Endothelial cell of umbilical vein (primary cell): ENCODE measurements at regions of chr12 and their contacts with region 1.

Region 1: DNA sequence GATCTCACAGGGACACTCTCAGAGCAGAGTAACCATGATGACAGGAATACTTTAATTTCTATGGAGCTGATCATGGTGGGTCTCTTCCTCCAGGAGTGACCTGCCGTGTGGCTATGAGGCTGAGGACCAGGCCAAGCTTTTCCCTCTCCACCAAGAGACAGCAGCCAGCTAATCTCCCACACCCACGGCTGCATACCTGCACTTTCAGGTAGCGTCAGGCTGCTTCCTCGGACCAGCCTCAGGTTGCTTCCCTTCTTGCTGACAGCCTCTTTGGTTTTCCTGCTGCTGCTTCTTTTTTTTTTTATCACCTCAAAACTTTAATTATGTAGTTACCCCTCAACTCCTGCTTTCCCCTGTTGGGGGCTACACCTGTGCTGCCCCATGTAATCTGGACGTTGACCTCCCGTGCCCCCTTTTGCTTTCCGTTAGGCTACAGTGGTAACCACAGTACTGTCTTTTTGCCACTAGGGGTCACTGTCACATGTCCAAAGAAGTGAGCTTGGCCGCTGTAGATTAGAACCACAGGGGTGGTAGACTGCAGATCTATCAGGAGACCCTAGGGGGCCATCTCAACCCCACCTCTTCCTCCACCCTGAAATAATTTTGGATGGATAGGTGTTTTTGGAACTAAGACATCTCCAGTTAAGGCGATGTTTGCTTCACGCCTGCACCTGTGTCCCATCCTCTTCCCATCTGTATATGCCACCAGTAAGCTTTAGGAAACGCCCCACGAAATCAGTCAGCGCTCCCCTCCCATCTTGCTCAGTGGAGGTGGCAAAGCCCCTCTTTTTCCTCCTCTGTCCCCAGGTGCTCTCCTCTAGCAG is 7.8 kb upstream of the PIP4K2C start:
- DNase-seq: peak; percentile 71
- H3K4me3 ChIP-seq: no peak overlapping the region
- H3K27ac ChIP-seq: no peak overlapping the region
- H3K4me1 ChIP-seq: no peaks in the 10 kb centered on the region
- H3K27me3 ChIP-seq: peaks cover 17 to 21% of the 10 kb centered on the region in 2 experiments
- CTCF ChIP-seq: peak; percentile 87 to 93
- POLR2A ChIP-seq: no peak

Region 2: DNA sequence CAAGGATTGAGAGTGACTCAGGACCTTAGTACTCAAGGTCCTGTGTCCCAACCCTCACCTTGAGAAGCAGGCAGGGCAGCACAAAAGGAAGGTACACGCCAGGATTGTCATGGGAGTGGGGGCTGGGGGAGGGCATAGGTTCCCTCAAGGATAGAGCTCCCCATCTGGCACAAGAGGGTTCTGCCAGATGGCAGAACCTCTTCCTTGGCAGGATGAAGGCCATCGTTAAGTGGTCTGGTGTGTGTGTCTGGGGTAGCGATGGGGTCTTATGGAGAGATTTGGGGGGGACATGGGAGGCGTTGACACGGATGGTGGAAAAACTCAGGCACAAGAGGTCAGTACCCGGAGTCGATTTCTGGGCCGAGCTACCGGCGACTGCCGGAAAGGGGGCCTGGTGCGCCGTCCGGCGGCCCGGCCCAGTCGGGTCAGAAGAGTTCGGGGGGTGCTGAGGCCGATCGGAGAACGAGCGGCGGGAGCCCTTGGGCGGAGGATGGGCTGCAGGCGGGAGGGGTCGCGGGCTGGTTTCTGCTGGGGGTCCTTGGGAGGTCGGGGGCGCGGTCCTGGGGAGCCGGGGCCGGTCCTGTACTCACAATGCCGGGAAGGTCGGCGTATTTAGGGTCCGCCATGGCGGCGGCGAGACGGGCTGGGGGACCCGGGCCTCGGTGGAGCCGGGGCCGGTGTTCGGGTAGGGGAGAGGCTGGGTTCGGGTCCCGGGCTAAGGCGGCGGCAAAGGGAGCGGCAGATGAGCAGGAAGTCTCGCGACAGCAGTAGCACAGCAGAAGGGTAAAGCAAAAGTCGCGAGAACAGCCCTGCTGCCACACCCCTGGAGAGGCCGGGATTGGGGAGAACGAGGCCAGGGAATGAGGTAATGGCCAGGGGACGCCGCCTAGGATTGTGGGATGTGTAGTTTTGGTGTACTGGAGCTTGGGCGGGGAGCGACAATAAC is 36.5 kb before region 1 on chr12 and contains the start of gene DCTN2:
- CTCF ChIA-PET with region 1: interaction called, 12 read pairs
- POLR2A ChIA-PET with region 1: no interaction called
- dilution Hi-C with region 1: no loop called
- intact Hi-C with region 1: no loop called
- DNase-seq: peak; percentile 96
- H3K4me3 ChIP-seq: peak within 1 kb of the TSS; percentile 80 to 94 (median 82)
- H3K27ac ChIP-seq: peak within 1 kb of the TSS; percentile 77
- H3K4me1 ChIP-seq: peaks cover 18% of the 10 kb centered on the region
- H3K27me3 ChIP-seq: peaks cover 27 to 37% of the 10 kb centered on the region in 2 experiments
- CTCF ChIP-seq: no peak
- POLR2A ChIP-seq: no peak
- total RNA-seq, gene DCTN2: 157 and 161 TPM in 2 replicates

Region 3: GRCh38 chr12:57611108-57611809 is 28.0 kb after region 1 on chr12 and contains the start of gene ARHGEF25:
- CTCF ChIA-PET with region 1: interaction called, 54 read pairs
- POLR2A ChIA-PET with region 1: interaction called, 5 read pairs
- dilution Hi-C with region 1: no loop called
- intact Hi-C with region 1: no loop called
- DNase-seq: peak; percentile 24
- H3K4me3 ChIP-seq: peak within 1 kb of the TSS; percentile 46 to 67 (median 54)
- H3K27ac ChIP-seq: no peak within 1 kb of the TSS
- H3K4me1 ChIP-seq: peaks cover 3% of the 10 kb centered on the region
- H3K27me3 ChIP-seq: peaks cover 5 to 12% of the 10 kb centered on the region in 2 experiments
- CTCF ChIP-seq: no peak
- POLR2A ChIP-seq: peak; percentile 56
- total RNA-seq, gene ARHGEF25: 4.7 and 7.4 TPM in 2 replicates

Region 4: DNA sequence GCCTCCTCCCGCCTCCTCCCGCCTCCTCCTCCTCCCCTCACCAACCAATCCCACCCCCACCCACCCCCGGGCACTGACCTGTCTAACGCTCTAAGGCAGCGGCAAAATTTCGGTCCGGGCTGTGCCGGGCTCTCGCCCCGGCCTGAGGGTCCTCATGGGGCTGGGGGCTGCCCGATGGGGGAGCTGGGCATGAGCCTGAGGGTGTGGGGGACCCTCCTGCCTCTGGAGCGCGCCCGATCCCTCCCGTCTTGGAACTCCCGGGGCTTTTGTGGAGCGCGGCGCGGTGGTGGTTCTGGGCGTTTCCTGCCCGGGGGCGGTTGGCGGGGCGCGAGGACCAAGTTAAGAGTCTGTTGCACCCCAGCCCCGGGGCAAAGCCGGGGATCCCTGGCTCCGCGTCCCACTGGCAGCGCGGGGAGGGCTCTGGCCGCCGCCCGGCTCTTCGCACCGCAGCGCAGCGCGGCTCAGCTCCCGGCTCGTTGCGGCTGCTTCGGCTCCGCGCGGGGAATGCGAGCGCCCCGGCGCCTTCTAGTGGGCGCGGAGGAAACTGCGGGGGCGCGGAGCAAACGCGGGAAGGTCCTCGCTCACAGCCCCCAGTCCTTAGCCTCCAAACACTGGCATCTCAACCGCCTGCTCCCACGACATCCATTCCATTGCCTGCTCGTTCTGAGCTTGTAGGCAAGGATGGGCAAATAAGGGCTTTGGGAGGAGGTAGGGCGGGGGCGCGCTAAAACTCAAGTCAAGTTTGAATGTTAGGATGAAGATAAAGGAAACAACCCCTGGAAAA is 49.7 kb after region 1 on chr12 and contains the start of gene B4GALNT1:
- CTCF ChIA-PET with region 1: interaction called, 126 read pairs
- POLR2A ChIA-PET with region 1: no interaction called
- dilution Hi-C with region 1: no loop called
- intact Hi-C with region 1: loop called (anchors 1 kb)
- DNase-seq: peak; percentile 61
- H3K4me3 ChIP-seq: peak within 1 kb of the TSS in 2 of 3 experiments; percentile 24 to 36
- H3K27ac ChIP-seq: no peak within 1 kb of the TSS
- H3K4me1 ChIP-seq: no peaks in the 10 kb centered on the region
- H3K27me3 ChIP-seq: peaks cover 27 to 42% of the 10 kb centered on the region in 2 experiments
- CTCF ChIP-seq: peak; percentile 84 to 94
- POLR2A ChIP-seq: no peak
- total RNA-seq, gene B4GALNT1: 0.25 and 0.35 TPM in 2 replicates

Region 5: DNA sequence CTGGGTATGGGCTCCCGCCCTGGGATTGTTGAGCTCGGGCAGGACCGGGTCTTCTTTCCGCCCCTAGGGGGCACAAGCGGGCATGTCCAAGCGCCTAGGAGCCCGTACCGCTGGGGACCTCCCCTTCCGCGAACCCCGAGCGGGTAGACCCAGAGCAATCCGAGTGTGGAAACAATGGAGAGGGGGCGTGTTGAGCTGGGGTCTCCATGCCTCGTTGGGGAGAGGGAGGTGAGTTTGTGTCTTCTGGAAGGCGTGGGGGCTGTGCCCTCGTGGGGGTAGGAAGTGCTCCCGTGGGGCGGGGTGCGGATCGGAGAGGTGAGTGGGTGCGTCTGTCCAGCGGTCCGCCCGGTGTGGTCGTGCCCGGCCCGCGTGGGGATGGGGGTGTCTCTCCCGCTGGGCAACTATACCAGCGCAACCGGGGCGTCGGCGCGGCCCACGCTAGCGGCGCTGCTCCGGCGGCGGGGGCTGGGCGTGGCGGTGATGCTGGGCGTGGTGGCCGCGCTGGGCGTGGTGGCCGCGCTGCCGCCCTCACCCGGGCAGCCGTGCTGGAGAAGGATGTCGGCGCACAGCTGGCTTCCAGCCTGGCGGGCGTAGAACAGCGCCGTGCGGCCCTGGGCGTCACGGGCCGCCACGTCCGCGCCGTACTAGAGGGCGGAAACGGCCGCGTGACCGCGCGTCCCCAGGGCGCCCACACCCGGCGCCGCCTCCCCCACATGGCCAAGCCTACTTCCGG is 143.1 kb after region 1 on chr12:
- CTCF ChIA-PET with region 1: interaction called, 12 read pairs
- POLR2A ChIA-PET with region 1: no interaction called
- dilution Hi-C with region 1: no loop called
- intact Hi-C with region 1: no loop called
- DNase-seq: peak; percentile 74
- H3K4me3 ChIP-seq: peak overlapping the region; percentile 62 to 64 (median 62)
- H3K27ac ChIP-seq: peak overlapping the region; percentile 23
- H3K4me1 ChIP-seq: peaks cover 7% of the 10 kb centered on the region
- H3K27me3 ChIP-seq: peaks cover 2 to 8% of the 10 kb centered on the region in 2 experiments
- CTCF ChIP-seq: peak; percentile 88 to 97
- POLR2A ChIP-seq: peak; percentile 79

Region 6: GRCh38 chr12:57904848-57905811 is 321.9 kb after region 1 on chr12:
- CTCF ChIA-PET with region 1: interaction called, 6 read pairs
- POLR2A ChIA-PET with region 1: no interaction called
- dilution Hi-C with region 1: no loop called
- intact Hi-C with region 1: loop called (anchors 1 kb)
- DNase-seq: peak; percentile 92
- H3K4me3 ChIP-seq: no peak overlapping the region
- H3K27ac ChIP-seq: no peak overlapping the region
- H3K4me1 ChIP-seq: peaks cover 2% of the 10 kb centered on the region
- H3K27me3 ChIP-seq: peaks cover 12 to 14% of the 10 kb centered on the region in 2 experiments
- CTCF ChIP-seq: peak; percentile 100
- POLR2A ChIP-seq: no peak